PC-3 (cell line): ENCODE measurements at regions of chr10 and their contacts with region 1.

Region 1: DNA sequence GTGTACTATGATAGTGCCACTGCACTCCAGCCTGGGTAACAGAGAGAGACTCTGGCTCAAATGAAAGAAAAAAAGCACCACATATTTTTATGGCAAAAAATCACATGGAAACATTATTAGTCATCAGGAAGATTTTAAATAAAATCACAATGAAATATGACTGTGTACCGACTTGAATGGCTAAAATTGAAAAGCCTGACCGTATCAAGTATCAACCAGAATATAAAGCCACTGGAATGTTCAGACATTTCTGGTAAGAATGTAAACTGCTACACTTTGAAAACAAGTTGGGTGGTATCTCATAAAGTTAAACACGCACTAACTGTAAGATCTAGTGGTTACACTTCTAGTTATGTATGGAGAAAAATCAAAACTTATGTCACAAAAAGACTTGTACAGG is 306.7 kb upstream of the MBL2 start:
- DNase-seq: peak; percentile 89
- ATAC-seq: peak; percentile 99
- H3K4me3 ChIP-seq: no peak overlapping the region
- H3K27ac ChIP-seq: peak overlapping the region; percentile 1; the same call in 1 of the 2 replicates
- H3K4me1 ChIP-seq: peaks cover 10% of the 10 kb centered on the region
- H3K27me3 ChIP-seq: no peaks in the 10 kb centered on the region
- CTCF ChIP-seq: no peak

Region 2: GRCh38 chr10:53025172-53025711 is 54.0 kb before region 1 on chr10:
- CTCF ChIA-PET with region 1: no interaction called
- POLR2A ChIA-PET with region 1: no interaction called
- intact Hi-C with region 1: loop called (anchors 2 kb)
- DNase-seq: peak; percentile 85
- ATAC-seq: peak; percentile 81
- H3K4me3 ChIP-seq: peak overlapping the region; percentile 60
- H3K27ac ChIP-seq: peak overlapping the region; percentile 9
- H3K4me1 ChIP-seq: peaks cover 40% of the 10 kb centered on the region
- H3K27me3 ChIP-seq: no peaks in the 10 kb centered on the region
- CTCF ChIP-seq: no peak

Region 3: GRCh38 chr10:53102424-53102823 is 23.1 kb after region 1 on chr10:
- CTCF ChIA-PET with region 1: no interaction called
- POLR2A ChIA-PET with region 1: no interaction called
- intact Hi-C with region 1: loop called (anchors 2 kb)
- DNase-seq: peak; percentile 90
- ATAC-seq: peak; percentile 99
- H3K4me3 ChIP-seq: no peak overlapping the region
- H3K27ac ChIP-seq: no peak overlapping the region
- H3K4me1 ChIP-seq: peaks cover 13% of the 10 kb centered on the region
- H3K27me3 ChIP-seq: no peaks in the 10 kb centered on the region
- CTCF ChIP-seq: no peak

Region 4: GRCh38 chr10:53140500-53140899 is 61.2 kb after region 1 on chr10:
- CTCF ChIA-PET with region 1: no interaction called
- POLR2A ChIA-PET with region 1: no interaction called
- intact Hi-C with region 1: no loop called
- DNase-seq: peak; percentile 94
- ATAC-seq: peak; percentile 73
- H3K4me3 ChIP-seq: no peak overlapping the region
- H3K27ac ChIP-seq: peak overlapping the region; percentile 41
- H3K4me1 ChIP-seq: peaks cover 8% of the 10 kb centered on the region
- H3K27me3 ChIP-seq: no peaks in the 10 kb centered on the region
- CTCF ChIP-seq: no peak